ENCODE measurements at regions of chr11 and their contacts with region 1.

Region 1: GRCh38 chr11:15208378-15209222 is 93.9 kb downstream of the INSC start:
- DNase-seq: peak; percentile 84
- H3K4me3 ChIP-seq: no peak overlapping the region
- H3K27ac ChIP-seq: no peak overlapping the region
- H3K4me1 ChIP-seq: no peaks in the 10 kb centered on the region
- H3K27me3 ChIP-seq: peaks cover 0 to 6% (median 0%) of the 10 kb centered on the region in 3 donors
- CTCF ChIP-seq: peak; percentile 42 to 94 (median 88)
- EP300 ChIP-seq: no peak
- POLR2A ChIP-seq: no peak

Region 2: GRCh38 chr11:14566331-14567063 is 642.1 kb before region 1 on chr11:
- intact Hi-C with region 1: no loop called
- DNase-seq: no peak
- H3K4me3 ChIP-seq: no peak overlapping the region
- H3K27ac ChIP-seq: no peak overlapping the region
- H3K4me1 ChIP-seq: peaks cover 0 to 7% (median 3%) of the 10 kb centered on the region in 4 donors
- H3K27me3 ChIP-seq: no peaks in the 10 kb centered on the region
- CTCF ChIP-seq: no peak
- EP300 ChIP-seq: no peak
- POLR2A ChIP-seq: no peak

Region 3: DNA sequence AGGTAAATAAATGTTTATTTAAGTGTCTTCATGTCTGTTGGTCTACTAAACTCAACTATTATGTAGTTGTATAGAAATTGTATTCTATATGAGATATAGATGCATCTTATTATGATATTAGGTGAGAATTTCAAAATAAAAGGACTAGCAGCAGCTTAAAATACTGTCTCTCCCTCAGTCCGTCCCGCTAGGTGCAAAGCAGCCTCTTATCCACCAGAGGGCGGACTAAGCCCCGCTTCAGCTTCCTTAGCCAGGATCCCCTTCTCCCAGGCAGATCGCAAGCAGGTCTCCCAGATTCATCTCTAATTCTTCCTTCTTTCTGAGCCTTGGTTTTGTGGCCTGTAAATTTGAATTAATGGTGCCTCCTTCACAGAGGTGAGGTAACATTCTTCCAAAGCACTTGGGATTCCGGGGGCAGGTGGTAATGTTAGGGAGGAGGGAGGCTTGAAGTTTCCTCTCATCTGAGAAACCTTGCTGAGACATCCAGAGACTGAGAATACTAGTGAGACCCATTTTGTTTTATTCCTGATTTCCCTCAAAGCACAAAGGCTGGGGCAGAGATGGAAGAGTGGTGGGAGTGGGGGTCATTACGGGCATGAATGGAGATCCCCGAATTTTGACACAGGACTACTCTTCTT is 107.4 kb before region 1 on chr11:
- intact Hi-C with region 1: loop called (anchors 1 kb)
- DNase-seq: peak; percentile 81
- H3K4me3 ChIP-seq: no peak overlapping the region
- H3K27ac ChIP-seq: no peak overlapping the region
- H3K4me1 ChIP-seq: no peaks in the 10 kb centered on the region
- H3K27me3 ChIP-seq: no peaks in the 10 kb centered on the region
- CTCF ChIP-seq: peak; percentile 47 to 95 (median 72)
- EP300 ChIP-seq: no peak
- POLR2A ChIP-seq: no peak

Region 4: DNA sequence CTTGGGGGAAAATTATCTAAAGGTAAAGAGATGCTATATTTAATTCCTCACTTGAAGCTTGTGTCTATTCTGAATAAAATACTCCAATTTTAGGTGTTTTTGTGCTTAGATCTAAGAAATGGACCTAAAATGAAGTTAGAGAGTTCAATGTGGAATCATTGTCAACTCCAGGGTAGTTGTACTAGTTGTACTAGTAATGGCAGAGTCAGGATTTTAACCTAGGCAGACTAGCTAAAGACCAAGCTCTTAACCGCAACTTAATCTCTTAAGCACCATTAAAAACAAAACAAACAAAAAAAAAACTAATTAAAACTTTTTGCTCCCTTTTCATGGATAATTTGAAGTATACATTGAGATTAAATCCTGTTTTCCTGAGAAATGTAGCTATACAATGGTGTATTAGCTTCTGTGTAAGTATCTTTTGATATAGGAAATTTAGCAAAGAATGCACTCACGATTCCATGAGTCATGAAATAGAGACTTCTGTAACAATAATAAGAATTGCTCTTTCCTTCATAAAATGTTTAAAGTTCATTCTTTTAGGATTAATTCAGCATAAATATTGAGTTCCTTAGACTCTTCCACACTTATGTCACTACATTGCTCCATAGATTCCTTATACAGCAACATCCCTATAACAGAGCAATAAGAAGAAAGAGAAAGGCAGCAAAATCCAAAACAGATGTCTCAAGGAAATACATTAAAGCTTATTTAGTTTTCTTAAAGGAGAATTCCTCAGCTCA is 1174.2 kb after region 1 on chr11:
- intact Hi-C with region 1: no loop called
- DNase-seq: no peak
- H3K4me3 ChIP-seq: no peak overlapping the region
- H3K27ac ChIP-seq: no peak overlapping the region
- H3K4me1 ChIP-seq: no peaks in the 10 kb centered on the region
- H3K27me3 ChIP-seq: no peaks in the 10 kb centered on the region
- CTCF ChIP-seq: no peak
- EP300 ChIP-seq: no peak
- POLR2A ChIP-seq: no peak